Caki2 (cell line): ENCODE measurements at regions of chr20 and their contacts with region 1.

Region 1: DNA sequence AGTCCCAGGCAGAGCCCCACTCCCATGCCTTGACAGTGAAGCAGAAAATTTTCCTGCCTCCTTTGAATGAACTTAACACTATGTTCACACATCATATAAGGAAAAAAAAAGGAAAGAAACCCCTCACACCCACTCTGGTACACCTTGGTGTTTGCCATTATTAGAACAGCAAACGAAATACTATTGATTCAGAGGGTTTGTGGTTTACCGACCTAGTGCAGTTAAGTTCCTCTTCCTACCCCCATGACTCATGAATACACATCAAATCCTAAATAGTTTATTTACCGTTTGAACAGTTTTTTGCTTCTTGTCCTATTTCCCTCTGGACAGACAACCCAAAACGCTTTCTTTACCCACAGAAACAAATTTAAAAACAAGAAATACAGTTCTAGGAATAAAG is 237.7 kb downstream of the FOXA2 start:
- DNase-seq: no peak

Region 2: GRCh38 chr20:22684072-22684762 is 337.5 kb after region 1 on chr20:
- in situ Hi-C with region 1: loop called (anchors 10 kb)
- DNase-seq: peak; percentile 67